ENCODE measurements at regions of chr15 and their contacts with region 1.

Region 1: DNA sequence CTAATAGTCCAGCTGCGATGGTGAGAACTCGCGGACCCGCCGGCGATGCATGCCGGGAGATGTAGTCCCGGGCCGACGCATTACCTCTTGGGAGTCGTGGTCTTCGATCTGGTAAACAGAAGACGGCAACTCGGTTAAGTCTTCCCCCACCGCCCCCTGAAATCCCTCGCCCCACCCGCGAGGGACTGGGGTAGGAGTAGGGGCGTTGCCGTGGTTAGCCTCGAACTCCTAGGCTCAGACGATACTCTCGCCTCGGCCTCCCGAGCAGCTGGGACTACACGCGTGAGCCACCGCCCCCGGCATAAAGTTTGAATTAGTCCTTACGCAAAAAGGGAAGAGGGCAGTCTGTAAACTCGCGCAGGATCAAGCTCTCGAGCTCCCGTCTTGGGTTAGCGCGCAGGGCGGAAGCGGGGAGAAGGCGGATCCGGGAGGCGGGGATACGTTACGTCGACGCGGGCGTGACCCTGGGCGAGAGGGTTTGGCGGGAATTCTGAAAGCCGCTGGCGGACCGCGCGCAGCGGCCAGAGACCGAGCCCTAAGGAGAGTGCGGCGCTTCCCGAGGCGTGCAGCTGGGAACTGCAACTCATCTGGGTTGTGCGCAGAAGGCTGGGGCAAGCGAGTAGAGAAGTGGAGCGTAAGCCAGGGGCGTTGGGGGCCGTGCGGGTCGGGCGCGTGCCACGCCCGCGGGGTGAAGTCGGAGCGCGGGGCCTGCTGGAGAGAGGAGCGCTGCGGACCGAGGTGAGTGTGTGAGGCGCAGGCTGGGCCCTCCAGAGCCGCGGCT is at the start of gene RAD51:
- DNase-seq: peak; percentile 88
- ATAC-seq: peak; percentile 90
- H3K4me3 Mint-ChIP-seq: peak within 1 kb of the TSS; percentile 99
- H3K27ac Mint-ChIP-seq: peak within 1 kb of the TSS; percentile 98
- H3K4me1 Mint-ChIP-seq: peaks cover 25% of the 10 kb centered on the region
- H3K27me3 Mint-ChIP-seq: no peaks in the 10 kb centered on the region
- CTCF ChIP-seq: no peak
- total RNA-seq, gene RAD51: 2.6 and 4.1 TPM in 2 replicates

Region 2: DNA sequence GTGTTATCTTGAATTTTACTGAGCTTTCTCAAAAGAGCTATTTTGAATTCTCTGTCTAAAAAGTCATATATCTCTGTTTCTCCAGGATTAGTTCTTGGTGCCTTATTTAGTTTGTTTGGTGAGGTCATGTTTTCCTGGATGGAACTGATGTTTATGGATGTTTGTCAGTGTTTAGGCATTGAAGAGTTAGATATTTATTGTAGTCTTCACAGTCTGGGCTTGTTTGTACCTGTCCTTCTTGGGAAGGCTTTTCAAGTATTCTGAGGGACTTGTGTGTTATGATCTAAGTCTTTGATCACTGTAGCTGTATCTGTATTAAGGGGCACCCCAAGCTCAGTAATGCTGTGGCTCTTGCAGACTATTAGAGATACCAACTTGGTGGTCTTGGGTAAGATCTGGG is 10.5 kb before region 1 on chr15:
- CTCF ChIA-PET with region 1: no interaction called
- POLR2A ChIA-PET with region 1: interaction called, 12 read pairs
- intact Hi-C with region 1: loop called (anchors 1 kb)
- DNase-seq: no peak
- ATAC-seq: no peak
- H3K4me3 Mint-ChIP-seq: no peak overlapping the region
- H3K27ac Mint-ChIP-seq: no peak overlapping the region
- H3K4me1 Mint-ChIP-seq: peaks cover 15% of the 10 kb centered on the region
- H3K27me3 Mint-ChIP-seq: no peaks in the 10 kb centered on the region
- CTCF ChIP-seq: no peak

Region 3: GRCh38 chr15:40754883-40755811 is 60.3 kb after region 1 on chr15 and contains the start of gene RMDN3:
- CTCF ChIA-PET with region 1: no interaction called
- POLR2A ChIA-PET with region 1: no interaction called
- intact Hi-C with region 1: loop called (anchors 1 kb)
- DNase-seq: peak; percentile 93
- ATAC-seq: peak; percentile 97
- H3K4me3 Mint-ChIP-seq: peak within 1 kb of the TSS; percentile 90
- H3K27ac Mint-ChIP-seq: peak within 1 kb of the TSS; percentile 91
- H3K4me1 Mint-ChIP-seq: peaks cover 25% of the 10 kb centered on the region
- H3K27me3 Mint-ChIP-seq: no peaks in the 10 kb centered on the region
- CTCF ChIP-seq: no peak
- total RNA-seq, gene RMDN3: 25.5 and 25.6 TPM in 2 replicates

Region 4: GRCh38 chr15:40769274-40770146 is 74.6 kb after region 1 on chr15 and contains the start of gene C15orf62:
- CTCF ChIA-PET with region 1: no interaction called
- POLR2A ChIA-PET with region 1: interaction called, 49 read pairs
- intact Hi-C with region 1: loop called (anchors 1 kb)
- DNase-seq: peak; percentile 81
- ATAC-seq: peak; percentile 84
- H3K4me3 Mint-ChIP-seq: peak within 1 kb of the TSS; percentile 82
- H3K27ac Mint-ChIP-seq: peak within 1 kb of the TSS; percentile 93
- H3K4me1 Mint-ChIP-seq: peaks cover 59% of the 10 kb centered on the region
- H3K27me3 Mint-ChIP-seq: no peaks in the 10 kb centered on the region
- CTCF ChIP-seq: no peak
- total RNA-seq, gene C15orf62: 5.7 and 6.5 TPM in 2 replicates

Region 5: DNA sequence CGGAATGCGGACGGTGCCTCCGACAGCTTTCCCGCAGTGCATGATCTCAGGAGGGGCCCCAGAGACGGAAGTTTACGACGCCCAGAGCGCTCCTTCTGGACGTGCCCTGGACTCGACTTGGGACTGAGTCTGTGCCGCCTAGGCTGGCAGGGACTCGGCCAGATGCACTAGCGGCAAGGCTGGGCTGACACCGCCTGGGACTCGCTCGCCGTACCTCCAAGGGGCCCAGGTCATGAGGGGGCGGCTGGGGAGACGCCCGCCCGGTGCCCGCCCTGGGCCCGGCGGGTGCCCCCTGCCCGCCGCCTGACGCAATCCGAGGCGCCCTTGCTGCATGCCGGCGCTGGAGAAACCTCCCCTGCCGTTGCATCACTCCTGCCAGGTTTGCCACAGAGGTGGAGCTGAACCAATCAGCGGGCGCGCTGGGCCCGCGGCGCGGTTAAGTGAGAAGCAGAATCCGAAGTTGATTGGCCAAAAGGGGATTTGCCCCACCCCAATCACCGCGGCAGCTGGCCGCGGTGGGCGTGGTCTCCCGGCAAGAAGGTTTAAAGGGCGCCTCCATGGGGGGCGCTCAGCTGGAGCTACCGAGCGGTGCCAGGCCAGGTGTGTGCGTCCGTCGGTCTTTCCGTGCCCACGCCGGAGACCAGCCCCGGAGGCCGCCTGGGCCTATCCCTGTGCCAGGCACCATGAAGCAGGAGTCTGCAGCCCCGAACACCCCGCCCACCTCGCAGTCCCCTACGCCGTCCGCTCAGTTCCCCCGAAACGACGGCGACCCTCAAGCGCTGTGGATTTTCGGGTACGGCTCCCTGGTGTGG is 258.2 kb after region 1 on chr15 and contains the start of gene CHAC1:
- CTCF ChIA-PET with region 1: no interaction called
- POLR2A ChIA-PET with region 1: interaction called, 4 read pairs
- intact Hi-C with region 1: loop called (anchors 1 kb)
- DNase-seq: peak; percentile 88
- ATAC-seq: peak; percentile 94
- H3K4me3 Mint-ChIP-seq: peak within 1 kb of the TSS; percentile 93
- H3K27ac Mint-ChIP-seq: peak within 1 kb of the TSS; percentile 92
- H3K4me1 Mint-ChIP-seq: peaks cover 23% of the 10 kb centered on the region
- H3K27me3 Mint-ChIP-seq: peaks cover 7% of the 10 kb centered on the region
- CTCF ChIP-seq: no peak
- total RNA-seq, gene CHAC1: 22.3 and 27.3 TPM in 2 replicates

Region 6: GRCh38 chr15:41465822-41466421 is 771.0 kb after region 1 on chr15:
- CTCF ChIA-PET with region 1: no interaction called
- POLR2A ChIA-PET with region 1: no interaction called
- intact Hi-C with region 1: no loop called
- DNase-seq: no peak
- ATAC-seq: peak; percentile 50
- H3K4me3 Mint-ChIP-seq: no peak overlapping the region
- H3K27ac Mint-ChIP-seq: no peak overlapping the region
- H3K4me1 Mint-ChIP-seq: peaks cover 5% of the 10 kb centered on the region
- H3K27me3 Mint-ChIP-seq: no peaks in the 10 kb centered on the region
- CTCF ChIP-seq: no peak